Heart right ventricle (tissue), 16 donors: ENCODE measurements at regions of chr3 and their contacts with region 1.

Region 1: DNA sequence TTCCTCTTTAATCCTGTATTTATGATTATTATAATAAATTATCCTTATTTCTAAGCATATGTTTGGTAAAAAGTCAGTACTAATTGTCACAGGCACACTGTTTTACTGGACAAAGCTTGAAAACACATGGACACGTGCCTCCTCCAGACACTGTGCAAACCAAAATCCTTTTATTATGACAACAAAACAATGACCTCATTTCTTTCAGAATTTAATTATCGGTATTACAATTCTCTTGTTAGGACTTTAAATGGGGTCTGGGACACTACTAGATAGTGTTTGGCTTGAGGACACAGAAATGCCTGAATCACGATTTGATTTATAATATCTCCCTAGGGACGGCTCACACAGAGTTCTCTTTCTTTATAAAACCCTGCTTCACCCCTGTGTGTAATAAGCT is 107.3 kb upstream of the IGSF10 start:
- DNase-seq: no peak
- ATAC-seq: peak in 4 of 8 donors; percentile 27 to 58 (median 33)
- H3K4me3 ChIP-seq: no peak overlapping the region
- H3K27ac ChIP-seq: no peak overlapping the region
- H3K4me1 ChIP-seq: peaks cover 0 to 6% (median 0%) of the 10 kb centered on the region in 9 donors
- H3K27me3 ChIP-seq: no peaks in the 10 kb centered on the region
- CTCF ChIP-seq: no peak

Region 2: GRCh38 chr3:151379083-151379734 is 189.0 kb before region 1 on chr3:
- intact Hi-C with region 1: no loop called
- DNase-seq: peak; percentile 14 to 16
- ATAC-seq: peak in 3 of 8 donors; percentile 48 to 57 (median 51)
- H3K4me3 ChIP-seq: no peak overlapping the region
- H3K27ac ChIP-seq: no peak overlapping the region
- H3K4me1 ChIP-seq: peaks cover 0 to 24% (median 0%) of the 10 kb centered on the region in 9 donors
- H3K27me3 ChIP-seq: no peaks in the 10 kb centered on the region
- CTCF ChIP-seq: peak in 8 of 9 donors; percentile 5 to 62 (median 44)

Region 3: GRCh38 chr3:152737021-152737908 is 1169.1 kb after region 1 on chr3:
- intact Hi-C with region 1: loop called in 1 of 10 experiments (anchors 10 kb)
- DNase-seq: peak in 1 of 2 donors; percentile 11
- ATAC-seq: peak in 3 of 8 donors; percentile 52 to 83 (median 71)
- H3K4me3 ChIP-seq: no peak overlapping the region
- H3K27ac ChIP-seq: no peak overlapping the region
- H3K4me1 ChIP-seq: peaks cover 0 to 15% (median 13%) of the 10 kb centered on the region in 9 donors
- H3K27me3 ChIP-seq: no peaks in the 10 kb centered on the region
- CTCF ChIP-seq: no peak